AG04449 (cell line): ENCODE measurements at regions of chr7 and their contacts with region 1.

Region 1: DNA sequence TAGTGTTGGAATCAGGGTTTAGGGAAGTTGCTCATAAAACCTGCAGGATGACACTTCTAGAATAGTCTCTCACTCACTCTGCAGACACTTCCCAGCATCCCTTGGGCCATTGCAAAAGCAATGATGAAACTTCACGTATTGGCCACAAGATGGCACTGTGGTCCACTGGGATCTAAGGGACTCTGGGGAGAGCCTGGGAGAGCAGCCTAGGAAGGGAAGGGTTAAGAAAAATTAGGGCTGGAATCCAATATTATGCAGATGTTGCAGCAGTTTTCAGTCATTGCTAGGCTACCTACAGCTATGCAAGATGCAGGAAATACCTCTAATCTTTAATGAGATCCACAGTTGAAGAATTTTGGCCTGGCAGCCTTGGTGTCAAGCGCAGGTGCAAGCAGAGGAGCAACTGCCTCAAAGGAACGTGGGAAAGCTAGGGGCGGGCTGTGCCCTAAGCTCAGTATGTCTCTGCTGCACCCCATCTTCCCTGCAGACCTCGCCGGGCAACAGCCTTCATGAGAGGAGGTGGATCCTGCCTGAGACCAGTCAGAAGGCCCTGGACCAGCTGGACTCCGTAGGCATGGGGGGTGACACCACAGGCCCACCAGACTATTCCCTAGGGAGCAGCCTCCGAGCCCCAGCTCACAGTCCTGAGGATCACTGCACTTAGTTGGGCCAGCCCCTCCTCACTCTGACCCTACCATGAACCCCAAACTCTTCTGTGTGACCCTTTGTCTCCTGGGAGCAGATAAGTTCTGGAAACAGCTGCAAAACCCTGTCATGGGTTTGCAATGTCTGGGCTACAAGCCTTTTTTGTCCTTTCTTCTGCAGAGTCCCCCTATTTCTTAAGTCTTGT is 127.9 kb upstream of the PRSS58 start:
- DNase-seq: peak; percentile 16
- H3K4me3 ChIP-seq: no peak overlapping the region
- CTCF ChIP-seq: peak; percentile 85

Region 2: GRCh38 chr7:142323706-142324105 is 62.0 kb before region 1 on chr7:
- CTCF ChIA-PET with region 1: no interaction called
- POLR2A ChIA-PET with region 1: no interaction called
- DNase-seq: no peak
- H3K4me3 ChIP-seq: no peak overlapping the region
- CTCF ChIP-seq: peak; percentile 23

Region 3: GRCh38 chr7:142400042-142400533 is 14.4 kb after region 1 on chr7:
- CTCF ChIA-PET with region 1: interaction called, 113 read pairs
- POLR2A ChIA-PET with region 1: no interaction called
- DNase-seq: no peak
- H3K4me3 ChIP-seq: no peak overlapping the region
- CTCF ChIP-seq: no peak

Region 4: DNA sequence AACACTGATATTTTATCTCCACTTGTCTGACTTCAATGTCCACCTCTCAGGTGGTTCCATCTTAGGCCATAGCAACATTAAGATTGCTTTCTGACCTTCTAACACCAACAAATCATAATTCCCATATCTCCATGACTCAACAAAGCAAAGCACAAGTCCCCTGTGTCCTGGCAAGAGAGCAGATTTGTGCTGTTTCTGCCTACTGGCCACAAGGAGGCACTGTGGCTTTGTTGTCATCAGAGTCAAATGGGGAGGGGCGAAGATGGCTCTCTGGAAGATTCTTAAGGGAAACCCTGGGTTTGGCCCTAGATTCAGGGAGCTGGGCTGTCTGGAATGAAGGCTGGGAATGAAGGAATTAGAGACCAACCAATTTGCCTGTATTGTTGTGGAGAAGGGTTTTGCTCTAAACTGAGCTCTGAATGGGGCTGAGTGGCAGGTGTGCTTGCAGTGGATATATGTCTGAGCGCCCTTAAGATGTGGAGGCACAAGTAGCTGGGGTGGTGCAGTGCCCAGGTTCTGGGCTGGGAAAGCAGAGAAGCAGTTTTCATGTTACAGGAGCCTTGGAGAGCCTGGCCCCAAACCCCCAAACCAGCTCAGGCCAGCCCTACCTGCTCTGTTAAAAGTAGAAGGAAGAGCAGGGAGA is 27.0 kb after region 1 on chr7:
- CTCF ChIA-PET with region 1: interaction called, 45 read pairs
- POLR2A ChIA-PET with region 1: no interaction called
- DNase-seq: peak; percentile 16
- H3K4me3 ChIP-seq: no peak overlapping the region
- CTCF ChIP-seq: peak; percentile 84

Region 5: DNA sequence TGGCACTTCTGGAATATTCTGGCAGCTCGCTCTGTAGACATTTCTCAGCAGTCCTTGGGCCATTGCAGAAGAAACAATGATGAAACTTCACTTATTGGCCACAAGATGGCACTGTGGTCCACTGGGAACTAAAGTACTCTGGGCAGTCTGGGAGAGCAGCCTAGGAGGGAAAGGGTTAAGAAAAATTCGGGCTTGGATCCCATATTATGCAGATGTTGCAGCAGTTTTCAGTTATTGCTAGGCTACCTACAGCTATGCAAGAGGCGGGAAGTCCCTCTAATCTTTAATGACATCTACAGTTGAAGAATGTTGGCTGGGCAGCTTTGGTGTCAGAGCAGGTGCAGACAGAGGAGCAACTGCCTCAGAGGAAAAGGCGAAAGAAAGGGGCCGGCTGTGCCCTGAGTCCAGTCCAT is 73.8 kb after region 1 on chr7:
- CTCF ChIA-PET with region 1: interaction called, 22 read pairs
- POLR2A ChIA-PET with region 1: no interaction called
- DNase-seq: no peak
- H3K4me3 ChIP-seq: no peak overlapping the region
- CTCF ChIP-seq: peak; percentile 69

Region 6: GRCh38 chr7:142496545-142497041 is 110.9 kb after region 1 on chr7:
- CTCF ChIA-PET with region 1: interaction called, 14 read pairs
- POLR2A ChIA-PET with region 1: no interaction called
- DNase-seq: no peak
- H3K4me3 ChIP-seq: no peak overlapping the region
- CTCF ChIP-seq: peak; percentile 73